Activated B cell treated with CpG ODN at 0.5 μM for 24 hours (primary cell): ENCODE measurements at regions of chr19 and their contacts with region 1.

Region 1: GRCh38 chr19:35247526-35248306 is 1.1 kb upstream of the LSR start:
- DNase-seq: peak; percentile 59
- ATAC-seq: peak; percentile 52
- H3K4me3 Mint-ChIP-seq: peak overlapping the region; percentile 91
- H3K27ac Mint-ChIP-seq: peak overlapping the region; percentile 93
- H3K4me1 Mint-ChIP-seq: peaks cover 31% of the 10 kb centered on the region
- H3K27me3 Mint-ChIP-seq: peaks cover 2% of the 10 kb centered on the region
- CTCF ChIP-seq: no peak

Region 2: GRCh38 chr19:35299523-35300338 is 52.0 kb after region 1 on chr19:
- CTCF ChIA-PET with region 1: no interaction called
- POLR2A ChIA-PET with region 1: no interaction called
- intact Hi-C with region 1: no loop called
- DNase-seq: no peak
- ATAC-seq: no peak
- H3K4me3 Mint-ChIP-seq: no peak overlapping the region
- H3K27ac Mint-ChIP-seq: no peak overlapping the region
- H3K4me1 Mint-ChIP-seq: peaks cover 14% of the 10 kb centered on the region
- H3K27me3 Mint-ChIP-seq: no peaks in the 10 kb centered on the region
- CTCF ChIP-seq: no peak

Region 3: DNA sequence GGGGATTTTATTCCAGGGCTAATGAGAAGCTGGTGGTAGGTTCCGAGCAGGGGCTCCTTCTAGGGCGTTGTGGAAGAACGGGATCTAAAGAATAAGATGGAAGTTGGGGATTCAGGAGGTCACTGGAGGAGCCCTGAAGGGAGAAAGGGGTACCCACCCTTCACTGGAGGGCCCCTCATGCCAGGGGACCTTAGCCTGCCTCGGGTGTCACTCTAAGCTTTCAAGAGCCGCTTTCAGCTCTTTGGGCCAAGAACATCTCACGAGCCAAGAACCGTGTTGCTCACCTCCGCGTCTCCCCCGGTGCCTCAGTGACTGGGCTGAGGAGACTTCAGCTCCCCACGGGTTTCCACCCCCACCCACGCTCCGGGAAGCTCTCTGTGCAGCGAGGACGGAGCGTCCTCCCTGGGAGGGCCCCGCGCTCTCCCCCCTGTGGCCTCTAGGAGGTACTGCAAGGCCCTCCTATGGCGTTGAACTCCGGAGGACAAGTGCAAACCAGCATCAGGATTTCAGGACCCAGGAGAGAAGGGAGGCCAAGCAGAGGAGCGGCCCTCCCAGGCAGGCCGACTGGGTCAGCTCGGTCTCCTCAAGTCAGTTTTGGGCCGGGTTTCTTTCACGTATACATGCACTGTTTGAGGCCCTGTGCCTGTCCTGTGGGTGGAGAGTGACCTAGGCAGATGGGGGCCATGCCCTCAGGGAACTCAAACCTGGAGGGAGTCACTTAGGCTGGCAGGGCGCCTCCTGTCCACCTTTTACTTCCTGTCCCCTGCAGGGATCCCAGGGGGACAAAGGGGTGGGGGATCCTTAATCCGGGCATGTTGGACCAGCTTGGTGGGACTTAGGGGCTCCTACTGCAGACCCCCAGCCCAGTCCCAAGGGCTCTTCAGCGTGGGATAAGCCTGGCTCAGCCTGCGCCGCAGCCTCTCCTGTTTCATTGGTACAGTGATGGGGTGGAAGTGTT is 247.7 kb after region 1 on chr19:
- CTCF ChIA-PET with region 1: no interaction called
- POLR2A ChIA-PET with region 1: no interaction called
- intact Hi-C with region 1: loop called (anchors 1 kb)
- DNase-seq: peak; percentile 62
- ATAC-seq: peak; percentile 100
- H3K4me3 Mint-ChIP-seq: no peak overlapping the region
- H3K27ac Mint-ChIP-seq: no peak overlapping the region
- H3K4me1 Mint-ChIP-seq: peaks cover 8% of the 10 kb centered on the region
- H3K27me3 Mint-ChIP-seq: peaks cover 5% of the 10 kb centered on the region
- CTCF ChIP-seq: peak; percentile 67